ENCODE measurements at regions of chr16 and their contacts with region 1.

Region 1: GRCh38 chr16:82439671-82440293 is 187.0 kb upstream of the CDH13 start:
- DNase-seq: no peak
- H3K4me3 Mint-ChIP-seq: no peak overlapping the region
- H3K27ac Mint-ChIP-seq: no peak overlapping the region
- H3K4me1 Mint-ChIP-seq: no peaks in the 10 kb centered on the region
- H3K27me3 Mint-ChIP-seq: peaks cover 5% of the 10 kb centered on the region

Region 2: GRCh38 chr16:82344157-82344556 is 95.6 kb before region 1 on chr16:
- CTCF ChIA-PET with region 1: no interaction called
- POLR2A ChIA-PET with region 1: no interaction called
- intact Hi-C with region 1: no loop called
- DNase-seq: no peak
- H3K4me3 Mint-ChIP-seq: no peak overlapping the region
- H3K27ac Mint-ChIP-seq: no peak overlapping the region
- H3K4me1 Mint-ChIP-seq: no peaks in the 10 kb centered on the region
- H3K27me3 Mint-ChIP-seq: peaks cover 10% of the 10 kb centered on the region

Region 3: GRCh38 chr16:82421851-82422250 is 17.9 kb before region 1 on chr16:
- CTCF ChIA-PET with region 1: no interaction called
- POLR2A ChIA-PET with region 1: no interaction called
- intact Hi-C with region 1: no loop called
- DNase-seq: no peak
- H3K4me3 Mint-ChIP-seq: no peak overlapping the region
- H3K27ac Mint-ChIP-seq: no peak overlapping the region
- H3K4me1 Mint-ChIP-seq: no peaks in the 10 kb centered on the region
- H3K27me3 Mint-ChIP-seq: peaks cover 3% of the 10 kb centered on the region

Region 4: GRCh38 chr16:82456683-82457082 is 16.9 kb after region 1 on chr16:
- CTCF ChIA-PET with region 1: interaction called, 19 read pairs
- POLR2A ChIA-PET with region 1: no interaction called
- intact Hi-C with region 1: no loop called
- DNase-seq: peak; percentile 46
- H3K4me3 Mint-ChIP-seq: no peak overlapping the region
- H3K27ac Mint-ChIP-seq: no peak overlapping the region
- H3K4me1 Mint-ChIP-seq: no peaks in the 10 kb centered on the region
- H3K27me3 Mint-ChIP-seq: peaks cover 7% of the 10 kb centered on the region

Measured in activated CD4-positive, alpha-beta memory T cell treated with anti-CD3 and anti-CD28 coated beads for 36 hours (primary cell).